Sigmoid colon (tissue), 7 donors: ENCODE measurements at regions of chr12 and their contacts with region 1.

Region 1: GRCh38 chr12:101830367-101831325 is at the start of gene GNPTAB:
- DNase-seq: peak; percentile 95
- H3K4me3 ChIP-seq: peak within 1 kb of the TSS; percentile 66 to 91 (median 78)
- H3K27ac ChIP-seq: peak within 1 kb of the TSS; percentile 74 to 84 (median 82)
- H3K4me1 ChIP-seq: peaks cover 0 to 19% (median 17%) of the 10 kb centered on the region in 4 donors
- H3K27me3 ChIP-seq: no peaks in the 10 kb centered on the region
- CTCF ChIP-seq: peak; percentile 47 to 70 (median 58)
- EP300 ChIP-seq: no peak
- POLR2A ChIP-seq: no peak
- total RNA-seq, gene GNPTAB: 22.7 to 42.2 (median 36.6) TPM

Region 2: GRCh38 chr12:101407436-101408345 is 423.0 kb before region 1 on chr12 and contains the start of gene ARL1:
- intact Hi-C with region 1: loop called (anchors 5 kb)
- DNase-seq: peak; percentile 91
- H3K4me3 ChIP-seq: peak within 1 kb of the TSS; percentile 69 to 81 (median 76)
- H3K27ac ChIP-seq: peak within 1 kb of the TSS; percentile 82 to 96 (median 88)
- H3K4me1 ChIP-seq: peaks cover 0 to 27% (median 20%) of the 10 kb centered on the region in 4 donors
- H3K27me3 ChIP-seq: no peaks in the 10 kb centered on the region
- CTCF ChIP-seq: no peak
- EP300 ChIP-seq: no peak
- POLR2A ChIP-seq: peak; percentile 33 to 43
- total RNA-seq, gene ARL1: 49.3 to 72.2 (median 70.3) TPM

Region 3: DNA sequence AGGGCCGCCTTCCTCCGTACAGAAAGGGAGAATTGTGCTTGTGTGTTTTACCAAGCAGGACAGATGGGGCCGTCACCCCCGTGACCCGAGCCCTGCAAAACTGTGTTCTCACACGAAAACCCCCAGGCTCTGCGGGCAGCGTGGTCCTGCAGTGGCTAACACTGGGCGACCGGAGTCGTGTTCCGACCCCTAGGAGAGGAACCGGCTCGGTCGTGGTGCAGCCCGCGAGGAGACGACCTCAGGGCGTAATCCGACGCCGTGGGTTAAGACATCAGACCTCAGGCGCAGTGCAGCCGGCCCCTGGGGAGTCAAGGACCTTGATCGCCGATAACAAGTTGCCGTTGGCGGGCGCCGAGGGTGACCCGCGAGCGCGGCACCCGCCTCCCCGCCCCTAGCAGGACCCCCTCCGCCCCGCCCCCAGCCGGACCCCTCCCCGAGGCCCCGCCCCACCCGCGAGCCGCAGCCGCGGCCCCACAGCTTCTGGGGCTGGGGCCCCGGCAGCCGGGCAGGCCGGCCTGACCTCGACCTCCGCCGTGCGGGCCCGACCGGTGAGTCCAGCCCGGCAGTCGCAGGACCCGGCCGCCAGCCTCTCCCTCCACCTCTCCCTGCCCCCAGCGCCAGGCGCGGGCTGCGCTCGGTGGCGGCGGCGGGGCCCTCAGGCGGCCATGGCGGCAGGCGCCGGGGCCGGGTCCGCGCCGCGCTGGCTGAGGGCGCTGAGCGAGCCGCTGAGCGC is 133.3 kb before region 1 on chr12 and contains the start of gene CHPT1:
- intact Hi-C with region 1: loop called (anchors 5 kb)
- DNase-seq: peak; percentile 83
- H3K4me3 ChIP-seq: peak within 1 kb of the TSS; percentile 58 to 94 (median 94)
- H3K27ac ChIP-seq: peak within 1 kb of the TSS; percentile 89 to 96 (median 95)
- H3K4me1 ChIP-seq: peaks cover 0 to 54% (median 41%) of the 10 kb centered on the region in 4 donors
- H3K27me3 ChIP-seq: no peaks in the 10 kb centered on the region
- CTCF ChIP-seq: no peak
- EP300 ChIP-seq: no peak
- POLR2A ChIP-seq: no peak
- total RNA-seq, gene CHPT1: 49.9 to 118 (median 80.4) TPM

Region 4: GRCh38 chr12:101773650-101774162 is 56.9 kb before region 1 on chr12:
- intact Hi-C with region 1: loop called (anchors 2 kb)
- DNase-seq: peak; percentile 73
- H3K4me3 ChIP-seq: no peak overlapping the region
- H3K27ac ChIP-seq: no peak overlapping the region
- H3K4me1 ChIP-seq: no peaks in the 10 kb centered on the region
- H3K27me3 ChIP-seq: no peaks in the 10 kb centered on the region
- CTCF ChIP-seq: peak; percentile 86 to 95 (median 90)
- EP300 ChIP-seq: no peak
- POLR2A ChIP-seq: no peak

Region 5: DNA sequence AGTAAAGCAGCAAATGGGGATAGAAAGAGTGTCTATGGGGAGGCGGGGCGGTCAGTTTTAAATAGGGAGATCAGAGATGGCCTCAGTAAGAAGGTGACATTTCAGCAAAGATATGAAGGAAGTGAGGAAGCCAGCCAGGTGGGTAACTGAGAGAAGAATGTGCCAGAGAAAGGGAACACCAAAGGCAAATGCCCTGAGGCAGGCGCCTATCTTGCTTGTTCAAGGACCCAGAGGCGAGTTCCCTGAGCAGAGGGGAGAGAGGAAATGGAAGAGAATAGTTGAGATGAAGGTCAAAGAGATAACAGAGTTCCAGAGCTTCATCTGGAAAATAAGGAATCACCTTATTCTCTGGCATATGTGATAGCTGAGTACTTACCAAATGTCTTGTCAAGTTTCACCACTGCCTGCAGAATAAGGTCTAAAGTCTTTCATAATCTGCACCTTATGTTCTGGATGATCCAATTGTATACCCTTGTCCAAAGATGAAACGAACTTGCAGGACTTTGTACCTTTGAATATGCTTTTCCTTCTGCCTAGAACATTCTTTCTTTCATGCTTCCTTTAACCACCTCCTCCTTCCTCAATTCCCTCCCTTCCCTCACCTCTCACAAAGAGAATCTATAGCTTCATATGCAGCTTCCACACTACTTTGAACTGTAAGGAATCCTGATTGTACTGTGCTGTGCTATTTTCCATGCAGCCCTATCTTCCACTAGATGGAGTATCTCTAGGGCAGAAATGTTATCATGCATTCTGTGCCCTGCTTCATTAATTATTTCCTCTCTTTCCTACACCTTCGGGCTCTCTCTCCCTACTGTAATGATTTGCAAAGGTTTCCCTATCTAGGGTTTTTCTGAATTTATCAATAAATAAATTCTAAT is 38.4 kb before region 1 on chr12:
- intact Hi-C with region 1: loop called (anchors 5 kb)
- DNase-seq: no peak
- H3K4me3 ChIP-seq: no peak overlapping the region
- H3K27ac ChIP-seq: no peak overlapping the region
- H3K4me1 ChIP-seq: no peaks in the 10 kb centered on the region
- H3K27me3 ChIP-seq: no peaks in the 10 kb centered on the region
- CTCF ChIP-seq: peak; percentile 8 to 33 (median 11)
- EP300 ChIP-seq: no peak
- POLR2A ChIP-seq: no peak

Region 6: DNA sequence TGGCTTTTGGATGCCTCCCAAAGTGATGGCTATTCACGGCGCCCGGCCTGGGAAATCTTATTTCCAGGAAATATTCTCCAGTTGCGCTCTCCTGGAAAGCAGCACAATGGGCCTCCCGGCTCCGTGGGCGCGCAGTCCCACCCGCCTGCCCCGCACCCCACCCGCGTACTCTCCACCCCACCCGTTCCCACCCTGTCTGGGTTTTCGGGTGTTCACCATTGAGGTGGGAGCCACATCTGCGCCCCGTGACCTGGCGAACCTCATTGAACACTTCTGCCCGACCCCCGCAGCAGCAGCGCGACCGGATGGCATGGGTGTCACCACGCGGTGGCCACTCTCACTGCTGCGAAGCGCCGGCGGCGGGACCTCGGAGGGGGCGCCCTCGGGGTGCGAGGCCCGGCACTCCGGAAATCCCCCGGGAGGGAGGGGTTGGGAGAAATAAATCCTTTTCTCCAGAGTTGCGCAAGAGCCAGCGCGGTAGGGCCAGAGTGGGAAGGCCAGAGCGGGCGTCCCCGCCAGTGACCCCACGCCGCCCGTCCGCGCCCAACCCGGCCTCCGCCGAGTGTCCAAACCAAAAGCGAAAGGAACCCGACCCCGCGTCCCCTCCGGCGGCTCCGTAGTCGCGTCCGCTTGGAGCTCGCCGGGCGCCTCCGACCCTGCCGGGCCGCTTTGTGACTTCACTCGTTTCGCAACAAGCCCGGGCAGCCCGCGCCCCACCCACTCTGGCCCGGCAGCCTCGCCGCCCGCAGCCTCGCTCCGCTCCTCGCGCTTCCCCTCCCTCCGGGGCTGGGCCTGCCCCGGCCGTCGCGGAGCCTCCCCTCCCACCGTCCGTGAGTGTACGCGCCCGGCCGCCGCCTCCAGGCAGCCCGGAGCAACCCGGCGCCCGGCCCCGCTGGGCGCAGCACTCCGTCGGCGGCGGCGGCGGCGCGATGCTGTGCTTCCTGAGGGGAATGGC is 46.5 kb after region 1 on chr12 and contains the start of gene DRAM1:
- intact Hi-C with region 1: loop called (anchors 2 kb)
- DNase-seq: peak; percentile 96
- H3K4me3 ChIP-seq: peak within 1 kb of the TSS; percentile 76 to 98 (median 86)
- H3K27ac ChIP-seq: peak within 1 kb of the TSS; percentile 92 to 99 (median 98)
- H3K4me1 ChIP-seq: peaks cover 0 to 18% (median 9%) of the 10 kb centered on the region in 4 donors
- H3K27me3 ChIP-seq: no peaks in the 10 kb centered on the region
- CTCF ChIP-seq: no peak
- EP300 ChIP-seq: peak in 1 of 4 donors; percentile 43
- POLR2A ChIP-seq: peak; percentile 71 to 88
- total RNA-seq, gene DRAM1: 13.3 to 21.6 (median 18.1) TPM